ENCODE measurements at regions of chr3 and their contacts with region 1.

Region 1: DNA sequence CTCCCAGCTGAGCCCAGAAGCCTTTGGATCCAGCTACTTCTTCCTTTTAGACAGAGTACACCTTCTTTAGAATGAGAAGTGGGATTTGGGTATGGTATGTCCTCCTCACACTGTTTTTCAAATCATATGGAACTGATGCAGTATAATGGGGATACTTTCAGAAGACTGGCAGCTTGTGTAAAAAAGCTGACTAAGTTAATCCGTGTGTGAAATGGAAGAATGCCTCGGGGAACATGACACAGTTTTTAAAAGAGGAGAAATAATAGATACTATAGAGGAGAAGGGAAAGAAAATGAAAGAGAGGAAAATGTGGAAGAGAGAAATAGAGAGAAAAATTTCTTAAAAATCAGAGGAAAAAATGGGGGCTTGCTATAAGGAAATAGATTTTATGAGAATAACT is 47.7 kb downstream of the TUSC7 start:
- DNase-seq: no peak
- ATAC-seq: no peak

Region 2: DNA sequence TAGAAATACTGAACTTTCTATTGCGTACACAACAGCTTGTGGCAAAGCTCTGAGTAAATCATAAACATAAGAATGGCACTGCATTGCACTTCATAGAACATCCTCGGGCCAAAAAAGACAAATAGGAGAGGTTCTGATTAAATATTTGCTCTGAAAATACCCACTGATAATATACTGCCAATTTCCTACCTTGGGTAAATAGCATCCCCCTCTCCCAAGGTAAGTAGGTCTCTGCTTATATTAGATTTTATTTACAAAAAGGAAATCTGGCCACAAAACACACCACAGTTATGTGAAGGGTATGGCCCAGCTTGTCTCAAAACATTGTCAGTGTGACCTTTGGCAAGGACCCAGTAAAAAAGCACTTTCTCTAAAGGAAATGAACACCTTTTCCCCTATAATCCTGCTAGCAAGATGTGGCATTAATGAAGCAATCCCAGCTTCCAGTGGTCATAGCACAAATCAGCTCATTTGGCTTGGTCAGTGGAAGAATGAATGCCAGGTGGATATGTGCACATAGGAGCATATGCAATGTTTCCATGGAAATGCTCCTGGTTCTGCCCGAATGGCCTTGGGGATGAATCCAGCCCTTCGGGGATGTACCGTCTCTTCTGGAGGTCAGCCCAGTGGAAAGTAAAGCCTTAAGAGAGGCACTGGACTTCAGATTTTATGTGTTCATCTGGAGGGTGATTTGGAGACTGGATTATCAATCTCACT is 627.9 kb before region 1 on chr3:
- intact Hi-C with region 1: loop called in 1 of 2 experiments (anchors 10 kb)
- DNase-seq: no peak
- ATAC-seq: no peak

Measured in left colon (tissue), 2 donors.